IMR-90 (cell line): ENCODE measurements at regions of chr6 and their contacts with region 1.

Region 1: DNA sequence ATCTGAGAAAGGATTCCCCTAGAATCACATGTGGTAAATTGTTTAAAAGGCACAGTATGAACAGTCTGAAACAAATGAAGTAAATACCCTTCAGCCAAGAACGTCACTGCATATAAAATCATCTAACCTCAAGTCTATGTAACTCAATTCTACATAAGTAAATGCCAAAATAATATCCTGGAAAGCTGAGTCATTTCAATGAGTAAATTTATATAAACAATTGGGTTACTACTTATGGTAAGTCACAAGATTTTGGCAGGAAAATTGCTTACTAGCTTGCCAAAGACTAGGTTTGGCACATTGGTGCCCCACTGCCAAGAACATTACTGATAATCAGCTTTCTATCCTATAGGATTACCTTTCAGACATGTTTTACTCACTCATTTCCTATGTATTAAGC is 8.4 kb downstream of the GMDS start:
- DNase-seq: peak; percentile 98
- ATAC-seq: peak; percentile 96
- H3K4me3 ChIP-seq: no peak overlapping the region
- H3K27ac ChIP-seq: no peak overlapping the region
- H3K4me1 ChIP-seq: peaks cover 11% of the 10 kb centered on the region
- H3K27me3 ChIP-seq: no peaks in the 10 kb centered on the region
- CTCF ChIP-seq: no peak
- POLR2A ChIP-seq: no peak
- RAD21 ChIP-seq: no peak

Region 2: DNA sequence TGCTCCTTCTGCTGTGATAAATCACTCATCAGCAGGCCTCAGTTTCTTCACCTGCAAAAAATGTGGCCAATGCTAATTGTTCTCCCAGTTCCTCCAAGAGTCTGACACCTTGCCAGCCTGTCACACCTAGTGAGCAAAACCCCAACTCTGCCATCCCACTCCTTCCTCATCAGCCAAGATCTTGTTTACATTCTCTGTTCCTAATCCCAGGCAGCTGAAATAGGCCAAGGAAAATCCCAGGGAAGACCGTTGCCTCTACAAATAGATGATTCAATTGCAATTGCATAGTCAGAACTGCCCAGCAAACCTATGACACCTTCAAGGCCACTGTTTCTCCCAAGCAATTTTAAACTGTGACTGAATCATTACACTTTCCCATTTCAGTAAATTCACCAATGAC is 70.3 kb before region 1 on chr6:
- CTCF ChIA-PET with region 1: no interaction called
- POLR2A ChIA-PET with region 1: no interaction called
- dilution Hi-C with region 1: no loop called
- in situ Hi-C with region 1: no loop called
- intact Hi-C with region 1: loop called (anchors 10 kb)
- DNase-seq: peak; percentile 43
- ATAC-seq: 0 out of 2 replicates have a peak, but pooled peaks have one; percentile 25
- H3K4me3 ChIP-seq: no peak overlapping the region
- H3K27ac ChIP-seq: no peak overlapping the region
- H3K4me1 ChIP-seq: peaks cover 10% of the 10 kb centered on the region
- H3K27me3 ChIP-seq: no peaks in the 10 kb centered on the region
- CTCF ChIP-seq: no peak
- POLR2A ChIP-seq: no peak
- RAD21 ChIP-seq: no peak

Region 3: GRCh38 chr6:2403546-2403945 is 166.5 kb after region 1 on chr6:
- CTCF ChIA-PET with region 1: no interaction called
- POLR2A ChIA-PET with region 1: no interaction called
- dilution Hi-C with region 1: no loop called
- in situ Hi-C with region 1: no loop called
- intact Hi-C with region 1: no loop called
- DNase-seq: no peak
- ATAC-seq: no peak
- H3K4me3 ChIP-seq: no peak overlapping the region
- H3K27ac ChIP-seq: no peak overlapping the region
- H3K4me1 ChIP-seq: no peaks in the 10 kb centered on the region
- H3K27me3 ChIP-seq: no peaks in the 10 kb centered on the region
- CTCF ChIP-seq: no peak
- POLR2A ChIP-seq: no peak
- RAD21 ChIP-seq: no peak

Region 4: GRCh38 chr6:2651961-2652360 is 415.0 kb after region 1 on chr6:
- CTCF ChIA-PET with region 1: no interaction called
- POLR2A ChIA-PET with region 1: no interaction called
- dilution Hi-C with region 1: no loop called
- in situ Hi-C with region 1: no loop called
- intact Hi-C with region 1: no loop called
- DNase-seq: no peak
- ATAC-seq: no peak
- H3K4me3 ChIP-seq: no peak overlapping the region
- H3K27ac ChIP-seq: no peak overlapping the region
- H3K4me1 ChIP-seq: no peaks in the 10 kb centered on the region
- H3K27me3 ChIP-seq: peaks cover 2% of the 10 kb centered on the region
- CTCF ChIP-seq: no peak
- POLR2A ChIP-seq: no peak
- RAD21 ChIP-seq: no peak